ENCODE measurements at regions of chr1 and their contacts with region 1.

Region 1: DNA sequence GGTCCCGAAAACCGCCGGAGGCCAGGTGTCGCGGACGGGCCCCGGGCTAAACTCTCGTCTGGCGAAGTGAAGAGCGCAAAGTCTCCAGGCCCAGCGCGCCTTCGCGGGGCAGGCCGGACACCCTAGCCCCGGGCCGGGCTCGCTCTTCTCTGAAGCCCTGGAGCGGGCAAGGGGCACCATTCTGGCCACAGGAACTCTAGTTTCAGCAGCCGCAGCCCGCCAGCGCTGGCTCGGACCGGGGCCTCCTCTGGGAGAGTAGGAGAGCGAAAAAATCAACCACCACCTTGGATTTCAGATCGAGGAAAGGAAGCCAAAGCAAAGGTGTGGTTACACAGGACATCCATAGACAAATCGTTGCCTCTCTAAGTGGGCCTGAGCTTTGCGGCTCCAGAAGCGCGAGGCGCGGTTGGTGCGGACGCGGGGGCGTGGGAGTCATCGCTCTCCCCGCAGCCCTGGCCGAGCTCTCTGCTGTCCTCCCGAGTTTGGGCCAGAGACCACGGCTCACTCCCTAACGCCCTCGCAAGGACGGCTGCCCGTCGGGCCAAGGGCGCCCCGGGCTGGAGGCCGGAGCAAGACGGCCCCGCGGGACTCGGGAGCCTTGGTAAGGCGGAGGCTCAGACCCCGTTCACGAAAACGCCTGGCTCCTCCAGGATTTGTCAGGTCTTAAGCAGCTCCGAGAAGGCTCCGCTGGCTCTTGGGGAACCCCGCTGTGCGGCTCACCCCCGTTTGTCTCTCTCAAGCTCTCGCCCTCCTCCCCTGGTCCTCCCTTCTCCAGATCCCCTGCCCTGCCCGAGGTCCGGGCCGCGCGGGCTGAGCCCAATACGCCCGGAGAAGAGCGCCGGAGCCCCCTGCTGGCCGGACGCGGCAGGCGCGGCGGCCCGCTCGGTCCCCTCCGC is 132.9 kb upstream of the DPYD start:
- DNase-seq: peak; percentile 66
- ATAC-seq: peak; percentile 98
- H3K4me3 Mint-ChIP-seq: peak overlapping the region; percentile 54
- H3K27ac Mint-ChIP-seq: no peak overlapping the region
- H3K4me1 Mint-ChIP-seq: peaks cover 26% of the 10 kb centered on the region
- H3K27me3 Mint-ChIP-seq: peaks cover 85% of the 10 kb centered on the region

Region 2: GRCh38 chr1:96966536-96967138 is 1087.1 kb before region 1 on chr1:
- CTCF ChIA-PET with region 1: interaction called, 10 read pairs
- DNase-seq: peak; percentile 78
- ATAC-seq: no peak
- H3K4me3 Mint-ChIP-seq: no peak overlapping the region
- H3K27ac Mint-ChIP-seq: no peak overlapping the region
- H3K4me1 Mint-ChIP-seq: no peaks in the 10 kb centered on the region
- H3K27me3 Mint-ChIP-seq: peaks cover 38% of the 10 kb centered on the region

Region 3: DNA sequence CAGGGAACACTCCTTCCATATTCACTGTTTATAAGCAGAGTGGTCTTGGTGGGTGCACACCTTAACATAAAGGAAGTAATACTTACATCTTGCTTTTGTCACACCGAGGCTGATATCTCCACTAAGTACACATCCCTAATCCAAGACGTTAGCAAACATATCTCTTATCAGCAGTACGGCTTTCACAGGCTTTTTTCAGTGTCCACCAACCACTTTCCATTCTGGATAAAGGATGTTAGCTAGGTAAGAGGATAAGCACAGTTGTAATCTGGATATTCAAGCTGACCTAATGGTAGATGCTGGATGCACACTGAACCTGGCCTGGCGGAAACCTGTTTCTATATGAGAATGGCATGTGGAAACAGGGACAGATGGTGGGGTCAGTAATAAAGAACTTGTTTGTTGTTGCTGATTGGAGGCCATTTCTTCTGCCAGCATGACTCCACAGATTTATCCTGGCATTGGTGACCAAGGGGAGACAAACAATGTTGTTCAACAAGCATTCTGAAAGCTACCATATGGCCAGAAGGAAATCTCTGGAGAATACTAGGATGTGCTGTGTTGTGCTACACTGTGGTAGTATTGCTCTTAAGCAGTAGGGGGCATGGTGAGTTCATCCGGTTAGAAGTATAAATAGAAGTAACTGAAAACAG is 915.7 kb before region 1 on chr1:
- CTCF ChIA-PET with region 1: interaction called, 12 read pairs
- DNase-seq: peak; percentile 41
- ATAC-seq: peak; percentile 67
- H3K4me3 Mint-ChIP-seq: no peak overlapping the region
- H3K27ac Mint-ChIP-seq: no peak overlapping the region
- H3K4me1 Mint-ChIP-seq: peaks cover 3% of the 10 kb centered on the region
- H3K27me3 Mint-ChIP-seq: no peaks in the 10 kb centered on the region

Region 4: DNA sequence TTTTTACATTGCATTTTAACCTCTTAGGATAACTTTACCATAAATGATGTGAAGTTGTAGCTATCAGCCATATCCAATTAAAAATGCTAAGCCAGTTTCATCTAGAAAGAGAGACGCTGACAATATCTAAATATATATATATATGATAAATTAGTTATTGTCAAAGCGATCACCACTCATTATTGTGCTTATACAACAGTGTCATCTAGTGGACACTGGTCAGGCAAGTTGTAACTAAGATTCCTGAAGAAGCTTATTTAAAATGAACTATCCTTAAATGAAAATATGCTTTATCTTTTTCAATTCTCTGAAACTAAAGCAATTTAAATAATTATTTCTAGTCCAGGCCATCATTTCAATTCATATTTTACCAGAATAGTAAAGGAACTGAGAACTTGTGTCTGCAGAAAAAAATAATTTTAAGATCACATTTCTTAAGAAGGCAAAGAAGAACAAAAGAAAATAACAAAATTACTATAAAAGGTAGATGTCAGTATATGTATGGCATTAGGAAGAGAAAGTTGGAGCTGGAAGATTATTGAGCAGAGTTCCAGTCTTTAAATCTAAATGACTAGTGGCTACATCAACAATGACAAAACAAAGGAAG is 414.5 kb after region 1 on chr1:
- CTCF ChIA-PET with region 1: interaction called, 17 read pairs
- DNase-seq: no peak
- ATAC-seq: no peak
- H3K4me3 Mint-ChIP-seq: no peak overlapping the region
- H3K27ac Mint-ChIP-seq: no peak overlapping the region
- H3K4me1 Mint-ChIP-seq: peaks cover 2% of the 10 kb centered on the region
- H3K27me3 Mint-ChIP-seq: peaks cover 16% of the 10 kb centered on the region